ENCODE measurements at regions of chr7 and their contacts with region 1.

Region 1: GRCh38 chr7:128833148-128833945 is 3.1 kb downstream of the FLNC start:
- DNase-seq: peak; percentile 48
- H3K4me3 ChIP-seq: peak overlapping the region in 2 of 4 donors; percentile 50 to 55
- H3K27ac ChIP-seq: peak overlapping the region; percentile 78 to 94 (median 82)
- H3K4me1 ChIP-seq: peaks cover 12 to 46% (median 27%) of the 10 kb centered on the region in 4 donors
- H3K27me3 ChIP-seq: peaks cover 47% of the 10 kb centered on the region
- CTCF ChIP-seq: no peak
- EP300 ChIP-seq: no peak
- POLR2A ChIP-seq: no peak

Region 2: DNA sequence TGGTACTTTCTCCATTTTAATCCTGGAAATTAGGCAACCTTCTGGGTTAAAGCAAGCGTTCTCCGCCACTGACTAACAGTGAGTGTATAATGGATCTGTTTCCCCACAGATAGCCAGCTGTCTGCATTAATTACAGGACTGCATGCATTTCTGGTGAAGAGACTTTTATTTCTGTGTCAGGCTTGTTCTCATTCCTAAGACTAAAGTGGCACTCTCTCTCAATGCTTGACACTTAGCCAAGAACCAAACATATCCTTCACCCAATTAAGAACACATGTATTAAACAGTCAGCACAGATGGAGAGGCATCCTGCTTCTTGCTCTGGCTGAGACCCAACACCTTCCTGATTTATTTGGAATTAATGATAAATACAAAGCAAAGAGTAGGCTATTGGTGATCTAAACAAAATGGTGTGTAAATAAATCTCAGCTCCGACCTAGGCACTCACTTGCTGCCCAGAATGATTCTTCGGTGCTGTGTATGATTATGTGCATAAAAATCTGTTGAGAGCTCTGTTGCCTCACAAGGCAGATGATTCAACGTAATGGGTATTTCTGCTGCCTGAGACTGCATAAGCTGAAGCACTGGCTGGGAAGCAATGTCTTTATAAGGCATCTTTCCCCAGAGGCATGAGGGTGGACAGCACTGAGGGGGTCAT is 77.4 kb before region 1 on chr7:
- in situ Hi-C with region 1: no loop called
- intact Hi-C with region 1: loop called (anchors 2 kb)
- DNase-seq: no peak
- H3K4me3 ChIP-seq: no peak overlapping the region
- H3K27ac ChIP-seq: peak overlapping the region; percentile 71 to 83 (median 82)
- H3K4me1 ChIP-seq: peaks cover 0 to 3% (median 3%) of the 10 kb centered on the region in 4 donors
- H3K27me3 ChIP-seq: no peaks in the 10 kb centered on the region
- CTCF ChIP-seq: no peak
- EP300 ChIP-seq: peak; percentile 56
- POLR2A ChIP-seq: no peak